ENCODE measurements at regions of chr6 and their contacts with region 1.

Region 1: DNA sequence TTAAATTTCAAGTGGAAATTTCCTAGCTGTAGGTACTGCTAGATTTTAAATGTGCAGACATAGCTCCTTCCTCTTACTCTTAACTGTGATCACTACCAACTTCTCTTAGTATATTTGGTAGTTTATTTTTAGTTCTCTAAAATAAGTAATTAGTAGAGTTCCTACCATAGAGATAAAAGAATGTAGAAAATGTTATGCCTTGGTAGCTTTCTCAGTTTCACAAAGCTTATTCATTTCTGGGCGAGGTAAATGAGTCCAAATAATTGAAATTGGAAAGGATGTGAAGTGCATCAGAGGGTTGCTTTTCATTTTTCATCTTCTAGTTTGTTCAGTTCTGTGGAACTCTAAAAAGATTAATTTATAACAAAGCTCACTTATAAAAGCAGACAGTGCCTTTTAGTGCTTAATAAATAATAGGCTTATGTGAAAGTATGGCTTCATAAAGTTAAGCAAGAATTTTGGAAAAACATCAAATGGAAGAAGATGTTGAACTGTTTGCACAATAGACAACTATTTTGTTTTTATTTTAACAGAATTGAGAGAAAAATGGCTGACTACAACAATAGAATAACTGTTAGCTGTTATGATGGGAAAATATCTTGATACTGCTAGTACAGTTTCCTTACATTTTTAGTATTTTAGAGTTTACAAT is 303.7 kb downstream of the UTRN start:
- DNase-seq: no peak
- H3K4me3 ChIP-seq: no peak overlapping the region
- H3K27ac ChIP-seq: no peak overlapping the region
- H3K4me1 ChIP-seq: no peaks in the 10 kb centered on the region
- H3K27me3 ChIP-seq: no peaks in the 10 kb centered on the region
- CTCF ChIP-seq: no peak
- POLR2A ChIP-seq: no peak

Region 2: GRCh38 chr6:144601221-144601620 is 12.4 kb after region 1 on chr6:
- CTCF ChIA-PET with region 1: interaction called, 10 read pairs
- POLR2A ChIA-PET with region 1: no interaction called
- dilution Hi-C with region 1: no loop called
- intact Hi-C with region 1: no loop called
- DNase-seq: no peak
- H3K4me3 ChIP-seq: no peak overlapping the region
- H3K27ac ChIP-seq: no peak overlapping the region
- H3K4me1 ChIP-seq: no peaks in the 10 kb centered on the region
- H3K27me3 ChIP-seq: no peaks in the 10 kb centered on the region
- CTCF ChIP-seq: no peak
- POLR2A ChIP-seq: no peak

Region 3: DNA sequence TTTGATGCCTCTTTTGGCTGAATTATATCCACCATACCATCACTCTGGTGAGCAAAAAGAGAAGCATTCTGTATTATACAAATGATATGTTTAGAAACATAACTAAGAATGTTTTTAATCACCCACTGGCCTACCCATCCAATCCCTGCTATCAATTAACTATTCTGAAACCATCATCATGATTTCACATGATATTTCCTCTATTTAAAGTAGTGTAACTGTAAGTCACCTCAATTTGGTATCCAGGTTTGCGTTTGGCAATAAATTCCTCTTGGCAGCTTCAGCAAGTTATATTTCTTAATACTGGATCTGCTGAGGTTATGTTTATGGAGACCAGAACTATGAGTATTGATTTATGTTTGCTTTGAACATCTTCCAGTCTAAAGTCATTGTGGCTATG is 28.4 kb after region 1 on chr6:
- CTCF ChIA-PET with region 1: no interaction called
- POLR2A ChIA-PET with region 1: no interaction called
- dilution Hi-C with region 1: no loop called
- intact Hi-C with region 1: no loop called
- DNase-seq: no peak
- H3K4me3 ChIP-seq: no peak overlapping the region
- H3K27ac ChIP-seq: no peak overlapping the region
- H3K4me1 ChIP-seq: no peaks in the 10 kb centered on the region
- H3K27me3 ChIP-seq: no peaks in the 10 kb centered on the region
- CTCF ChIP-seq: no peak
- POLR2A ChIP-seq: no peak

Measured in endothelial cell of umbilical vein (primary cell).